Esophagus muscularis mucosa (tissue), 4 donors: ENCODE measurements at regions of chr11 and their contacts with region 1.

Region 1: GRCh38 chr11:96342961-96343711 is at the start of gene MAML2:
- DNase-seq: peak; percentile 99
- H3K4me3 ChIP-seq: peak within 1 kb of the TSS; percentile 66 to 90 (median 68)
- H3K27ac ChIP-seq: peak within 1 kb of the TSS; percentile 85 to 91 (median 88)
- H3K4me1 ChIP-seq: peaks cover 38 to 47% (median 42%) of the 10 kb centered on the region in 4 donors
- H3K27me3 ChIP-seq: no peaks in the 10 kb centered on the region
- CTCF ChIP-seq: peak in 2 of 3 experiments; percentile 92 to 94
- EP300 ChIP-seq: no peak
- POLR2A ChIP-seq: no peak
- total RNA-seq, gene MAML2: 20.0 to 33.7 (median 23.2) TPM

Region 2: DNA sequence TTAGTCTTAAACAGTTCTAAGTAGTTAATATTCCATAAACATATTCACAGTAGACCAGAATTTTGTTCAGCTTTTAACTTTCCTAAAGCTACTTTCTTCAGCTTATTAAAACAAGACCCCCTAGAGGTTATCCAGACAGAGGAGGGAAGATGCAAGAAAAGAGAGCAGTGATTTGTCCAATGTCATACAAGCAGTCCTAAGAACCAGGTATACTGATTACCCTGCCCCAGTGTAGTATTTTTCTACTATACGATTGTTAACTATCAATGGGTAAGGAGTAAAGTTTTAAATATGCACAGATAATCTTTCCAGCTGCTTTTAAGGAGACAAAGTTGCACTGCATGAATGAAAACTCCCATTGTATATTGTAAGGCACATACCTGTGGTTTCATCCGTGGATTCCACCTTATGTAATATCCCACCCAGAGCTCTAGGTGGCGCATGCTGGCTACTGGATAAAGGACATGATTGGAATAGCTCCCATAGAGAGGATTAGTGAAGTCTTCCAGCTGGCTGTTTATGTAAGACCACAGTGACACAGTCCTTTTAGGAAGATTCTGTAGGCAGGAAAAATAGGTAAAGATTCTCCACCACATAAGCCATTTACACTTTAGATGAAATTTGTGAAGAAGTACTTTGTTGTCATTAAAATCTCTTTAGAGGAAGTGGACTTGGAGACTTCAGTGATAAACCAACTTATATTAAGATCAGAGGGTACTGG is 507.2 kb before region 1 on chr11:
- intact Hi-C with region 1: loop called (anchors 5 kb)
- DNase-seq: peak; percentile 92
- H3K4me3 ChIP-seq: no peak overlapping the region
- H3K27ac ChIP-seq: peak overlapping the region in 2 of 4 donors; percentile 7 to 24
- H3K4me1 ChIP-seq: peaks cover 4 to 9% (median 8%) of the 10 kb centered on the region in 4 donors
- H3K27me3 ChIP-seq: no peaks in the 10 kb centered on the region
- CTCF ChIP-seq: peak; percentile 77 to 91 (median 90)
- EP300 ChIP-seq: no peak
- POLR2A ChIP-seq: no peak

Region 3: GRCh38 chr11:95923728-95924413 is 419.3 kb before region 1 on chr11 and contains the start of gene MTMR2:
- intact Hi-C with region 1: loop called (anchors 5 kb)
- DNase-seq: peak; percentile 93
- H3K4me3 ChIP-seq: peak within 1 kb of the TSS; percentile 70 to 97 (median 85)
- H3K27ac ChIP-seq: peak within 1 kb of the TSS; percentile 95 to 97 (median 96)
- H3K4me1 ChIP-seq: peaks cover 12 to 42% (median 31%) of the 10 kb centered on the region in 4 donors
- H3K27me3 ChIP-seq: no peaks in the 10 kb centered on the region
- CTCF ChIP-seq: no peak
- EP300 ChIP-seq: no peak
- POLR2A ChIP-seq: peak; percentile 21
- total RNA-seq, gene MTMR2: 25.8 to 29.6 (median 27.9) TPM

Region 4: DNA sequence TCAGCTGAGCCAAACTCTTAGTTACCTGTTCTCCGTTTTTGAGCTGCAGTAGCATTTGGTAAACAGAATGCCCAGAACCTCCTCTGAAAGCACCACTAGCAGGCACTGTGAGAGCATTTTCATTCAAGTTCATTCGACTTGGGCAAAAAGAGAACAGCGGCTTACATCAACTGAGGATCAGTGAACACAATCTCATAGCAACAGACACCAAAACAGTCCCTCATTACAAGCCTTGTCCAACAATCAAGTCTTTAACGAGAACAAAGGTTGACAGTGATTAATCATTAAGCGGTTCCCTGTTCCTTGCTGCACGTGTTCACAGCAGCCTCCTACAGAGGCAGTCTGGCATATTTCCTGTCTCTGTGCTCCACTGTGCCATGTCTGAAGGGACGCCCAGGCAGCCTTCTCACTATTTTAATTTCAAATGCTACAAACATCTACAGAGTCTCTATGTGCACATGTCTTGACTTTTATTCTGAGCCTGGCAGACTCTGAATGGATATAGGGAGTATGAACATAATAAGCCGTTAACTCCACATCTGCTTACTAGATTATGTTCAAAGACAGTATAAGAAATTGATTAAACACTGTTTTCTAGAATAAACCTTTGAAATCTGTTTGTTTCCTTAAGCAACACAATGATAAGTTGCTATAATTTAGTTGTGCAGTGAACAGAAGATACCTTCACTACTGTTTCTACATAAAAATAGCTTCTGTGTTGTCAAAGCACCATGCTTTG is 330.9 kb before region 1 on chr11:
- intact Hi-C with region 1: loop called (anchors 5 kb)
- DNase-seq: no peak
- H3K4me3 ChIP-seq: peak overlapping the region in 3 of 4 donors; percentile 13 to 23 (median 15)
- H3K27ac ChIP-seq: peak overlapping the region; percentile 62 to 66 (median 65)
- H3K4me1 ChIP-seq: peaks cover 9 to 41% (median 26%) of the 10 kb centered on the region in 4 donors
- H3K27me3 ChIP-seq: no peaks in the 10 kb centered on the region
- CTCF ChIP-seq: peak; percentile 58 to 72 (median 71)
- EP300 ChIP-seq: no peak
- POLR2A ChIP-seq: no peak

Region 5: DNA sequence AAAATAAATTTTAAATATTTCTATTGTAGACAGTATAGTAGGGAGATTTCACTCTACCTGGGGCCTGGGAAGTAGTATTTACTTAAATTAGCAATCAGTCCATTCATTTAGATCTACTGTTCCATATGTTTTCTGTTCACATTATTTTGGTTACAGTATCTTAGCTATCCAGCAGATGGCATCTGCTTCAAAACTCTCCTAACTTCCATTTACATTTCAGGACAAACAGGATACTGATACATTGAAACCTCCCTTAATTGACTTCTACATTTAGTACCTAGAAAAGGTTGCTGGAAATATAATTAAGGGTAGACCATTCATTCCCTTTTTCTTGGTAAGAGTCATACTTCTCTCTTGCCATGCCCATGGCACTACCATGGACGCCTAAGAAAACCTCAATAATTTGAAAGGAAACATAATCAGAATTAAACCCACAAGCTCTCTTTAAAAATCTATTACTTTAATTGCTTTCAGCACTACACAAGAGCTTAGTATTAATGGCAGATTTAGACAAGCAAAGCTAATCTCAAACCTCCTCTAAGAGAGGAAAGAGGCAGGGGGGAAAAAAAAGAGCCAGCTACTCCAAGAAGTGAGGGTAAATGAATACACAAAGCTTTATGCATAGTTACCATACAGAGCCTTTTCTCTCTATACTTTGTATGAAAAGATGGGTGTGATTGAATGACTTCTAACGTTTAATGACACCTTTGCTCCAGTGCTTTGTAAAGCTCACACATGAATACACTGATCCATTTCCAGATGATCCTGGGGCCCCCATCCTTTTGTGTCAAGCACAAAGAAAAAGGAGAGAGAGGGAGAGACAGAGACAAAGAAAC is 288.0 kb before region 1 on chr11:
- intact Hi-C with region 1: loop called (anchors 2 kb)
- DNase-seq: no peak
- H3K4me3 ChIP-seq: no peak overlapping the region
- H3K27ac ChIP-seq: peak overlapping the region; percentile 31 to 65 (median 42)
- H3K4me1 ChIP-seq: peaks cover 4 to 64% (median 49%) of the 10 kb centered on the region in 4 donors
- H3K27me3 ChIP-seq: no peaks in the 10 kb centered on the region
- CTCF ChIP-seq: peak; percentile 60 to 70 (median 66)
- EP300 ChIP-seq: no peak
- POLR2A ChIP-seq: no peak

Region 6: GRCh38 chr11:96162816-96163499 is 180.2 kb before region 1 on chr11:
- intact Hi-C with region 1: loop called (anchors 5 kb)
- DNase-seq: no peak
- H3K4me3 ChIP-seq: no peak overlapping the region
- H3K27ac ChIP-seq: peak overlapping the region; percentile 60 to 82 (median 64)
- H3K4me1 ChIP-seq: peaks cover 11 to 54% (median 48%) of the 10 kb centered on the region in 4 donors
- H3K27me3 ChIP-seq: no peaks in the 10 kb centered on the region
- CTCF ChIP-seq: no peak
- EP300 ChIP-seq: no peak
- POLR2A ChIP-seq: no peak

Region 7: DNA sequence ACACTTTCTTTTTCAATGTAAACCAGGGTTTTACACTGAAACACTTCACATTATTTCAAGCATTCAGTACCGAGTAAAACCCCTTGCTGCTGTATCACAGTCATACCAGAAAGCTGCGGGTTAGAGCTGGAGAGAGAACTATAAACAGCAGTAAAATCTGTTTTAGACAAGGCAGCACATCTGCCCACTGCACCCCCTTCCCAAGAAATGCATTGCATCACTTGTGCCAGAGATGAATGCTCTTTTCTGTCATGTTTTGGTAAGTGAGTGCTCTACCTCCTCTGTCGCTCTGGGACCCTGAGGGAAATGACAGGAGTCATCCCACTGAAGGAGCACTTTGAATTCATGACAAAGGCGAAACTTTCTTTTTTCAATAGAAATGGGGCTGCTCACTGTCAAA is 107.4 kb before region 1 on chr11:
- intact Hi-C with region 1: loop called (anchors 5 kb)
- DNase-seq: no peak
- H3K4me3 ChIP-seq: no peak overlapping the region
- H3K27ac ChIP-seq: peak overlapping the region; percentile 54 to 67 (median 57)
- H3K4me1 ChIP-seq: peaks cover 6 to 51% (median 46%) of the 10 kb centered on the region in 4 donors
- H3K27me3 ChIP-seq: no peaks in the 10 kb centered on the region
- CTCF ChIP-seq: no peak
- EP300 ChIP-seq: no peak
- POLR2A ChIP-seq: no peak

Region 8: DNA sequence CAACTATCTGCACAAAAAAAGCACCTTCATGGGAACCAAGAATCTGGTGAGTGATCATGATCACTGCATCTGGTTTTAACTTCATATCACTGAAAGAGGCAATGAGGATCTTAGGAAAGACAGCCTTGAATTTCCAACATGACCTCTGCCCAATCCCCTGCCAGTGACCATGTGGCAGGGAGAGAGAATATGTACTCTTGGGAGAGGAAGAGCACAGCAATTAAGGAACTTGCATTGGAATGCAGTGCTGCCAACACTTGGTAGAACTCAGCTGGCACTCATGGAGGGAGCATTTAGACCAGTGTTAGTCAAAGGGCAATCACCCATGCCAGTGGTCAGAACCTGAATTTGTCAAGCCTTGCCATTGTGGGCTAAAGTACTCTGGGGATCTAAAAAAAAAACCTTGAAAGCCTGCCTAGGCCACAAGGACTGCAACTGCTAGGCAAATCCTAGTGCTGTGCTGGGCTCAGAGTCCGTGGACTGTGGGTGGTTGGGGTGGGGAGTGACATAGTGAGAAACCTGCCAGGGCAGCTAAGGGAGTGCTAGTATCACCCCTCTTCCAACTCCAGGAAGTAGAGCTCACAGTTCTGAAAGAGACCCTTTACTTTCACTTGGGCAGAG is 69.7 kb after region 1 on chr11:
- intact Hi-C with region 1: no loop called
- DNase-seq: no peak
- H3K4me3 ChIP-seq: no peak overlapping the region
- H3K27ac ChIP-seq: no peak overlapping the region
- H3K4me1 ChIP-seq: no peaks in the 10 kb centered on the region
- H3K27me3 ChIP-seq: peaks cover 0 to 20% (median 0%) of the 10 kb centered on the region in 4 donors
- CTCF ChIP-seq: no peak
- EP300 ChIP-seq: no peak
- POLR2A ChIP-seq: no peak